ENCODE measurements at regions of chr19 and their contacts with region 1.

Region 1: GRCh38 chr19:506404-507285 is 652 bp upstream of the TPGS1 start:
- DNase-seq: peak; percentile 88 to 99 (median 98)
- ATAC-seq: peak; percentile 67
- H3K4me3 ChIP-seq: peak overlapping the region; percentile 100
- H3K4me3 Mint-ChIP-seq: peak overlapping the region; percentile 89 to 100 (median 97)
- H3K27ac ChIP-seq: peak overlapping the region; percentile 87
- H3K27ac Mint-ChIP-seq: peak overlapping the region; percentile 96 to 100 (median 99)
- H3K4me1 ChIP-seq: peaks cover 29 to 40% of the 10 kb centered on the region in 2 donors
- H3K4me1 Mint-ChIP-seq: peaks cover 21 to 49% (median 46%) of the 10 kb centered on the region in 7 donors
- H3K27me3 ChIP-seq: no peaks in the 10 kb centered on the region
- H3K27me3 Mint-ChIP-seq: no peaks in the 10 kb centered on the region

Region 2: GRCh38 chr19:294946-295686 is 211.5 kb before region 1 on chr19:
- CTCF ChIA-PET with region 1: no interaction called
- POLR2A ChIA-PET with region 1: no interaction called
- intact Hi-C with region 1: loop called in 1 of 2 experiments (anchors 2 kb)
- DNase-seq: peak in 6 of 9 donors; percentile 18 to 52 (median 30)
- ATAC-seq: peak; percentile 74
- H3K4me3 ChIP-seq: no peak overlapping the region
- H3K4me3 Mint-ChIP-seq: peak overlapping the region in 5 of 10 donors; percentile 25 to 59 (median 47)
- H3K27ac ChIP-seq: no peak overlapping the region
- H3K27ac Mint-ChIP-seq: no peak overlapping the region
- H3K4me1 ChIP-seq: peaks cover 0 to 5% of the 10 kb centered on the region in 2 donors
- H3K4me1 Mint-ChIP-seq: peaks cover 0 to 23% (median 14%) of the 10 kb centered on the region in 7 donors
- H3K27me3 ChIP-seq: peaks cover 0 to 7% of the 10 kb centered on the region in 2 donors
- H3K27me3 Mint-ChIP-seq: peaks cover 25 to 43% (median 29%) of the 10 kb centered on the region in 5 donors

Region 3: DNA sequence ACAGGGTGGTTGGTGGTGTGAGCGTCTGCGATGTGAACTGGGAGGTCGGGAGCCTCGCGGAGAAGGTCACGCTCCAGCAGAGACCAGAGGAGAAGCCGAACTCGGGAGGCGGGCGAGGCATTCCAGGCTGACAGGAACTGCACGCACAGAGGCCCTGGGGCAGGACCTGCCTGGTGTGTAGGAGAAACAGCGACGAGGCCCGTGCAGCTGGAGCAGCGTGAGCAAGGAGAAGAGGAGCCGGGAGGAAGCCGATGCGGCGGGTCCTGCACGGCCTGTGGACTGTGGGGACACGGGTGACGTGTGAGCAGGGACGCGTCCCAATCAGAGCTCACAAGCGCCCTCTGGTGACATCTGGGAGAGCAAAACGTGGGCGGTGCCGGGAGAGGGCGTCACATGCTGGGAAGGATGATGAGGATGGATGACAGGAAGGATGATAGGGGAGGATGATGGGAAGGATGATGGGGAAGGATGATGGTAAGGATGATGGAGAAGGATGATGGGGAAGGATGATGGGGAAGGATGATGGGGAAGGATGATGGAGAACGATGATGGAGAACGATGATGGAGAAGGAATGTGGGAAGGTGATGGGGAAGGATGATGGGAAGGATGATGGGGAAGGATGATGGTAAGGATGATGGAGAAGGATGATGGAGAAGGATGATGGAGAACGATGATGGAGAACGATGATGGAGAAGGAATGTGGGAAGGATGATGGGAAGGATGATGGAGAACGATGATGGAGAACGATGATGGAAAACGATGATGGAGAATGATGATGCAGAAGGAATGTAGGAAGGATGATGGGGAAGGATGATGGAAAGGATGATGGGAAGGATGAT is 26.4 kb before region 1 on chr19:
- CTCF ChIA-PET with region 1: no interaction called
- POLR2A ChIA-PET with region 1: interaction called, 3 read pairs
- intact Hi-C with region 1: loop called in 1 of 2 experiments (anchors 1 kb)
- DNase-seq: peak in 5 of 9 donors; percentile 35 to 47 (median 45)
- ATAC-seq: peak; percentile 56
- H3K4me3 ChIP-seq: no peak overlapping the region
- H3K4me3 Mint-ChIP-seq: peak overlapping the region in 9 of 10 donors; percentile 43 to 81 (median 77)
- H3K27ac ChIP-seq: no peak overlapping the region
- H3K27ac Mint-ChIP-seq: peak overlapping the region in 8 of 9 donors; percentile 83 to 93 (median 90)
- H3K4me1 ChIP-seq: no peaks in the 10 kb centered on the region
- H3K4me1 Mint-ChIP-seq: peaks cover 6 to 16% (median 10%) of the 10 kb centered on the region in 7 donors
- H3K27me3 ChIP-seq: peaks cover 0 to 4% of the 10 kb centered on the region in 2 donors
- H3K27me3 Mint-ChIP-seq: peaks cover 0 to 19% (median 7%) of the 10 kb centered on the region in 5 donors

Region 4: GRCh38 chr19:518603-519231 is 12.1 kb after region 1 on chr19:
- CTCF ChIA-PET with region 1: interaction called, 8 read pairs
- POLR2A ChIA-PET with region 1: interaction called, 17 read pairs
- intact Hi-C with region 1: loop called (anchors 1 kb)
- DNase-seq: peak in 8 of 9 donors; percentile 53 to 74 (median 66)
- ATAC-seq: peak; percentile 92
- H3K4me3 ChIP-seq: no peak overlapping the region
- H3K4me3 Mint-ChIP-seq: peak overlapping the region in 4 of 10 donors; percentile 35 to 63 (median 40)
- H3K27ac ChIP-seq: peak overlapping the region; percentile 45
- H3K27ac Mint-ChIP-seq: peak overlapping the region in 2 of 9 donors; percentile 32 to 67
- H3K4me1 ChIP-seq: no peaks in the 10 kb centered on the region
- H3K4me1 Mint-ChIP-seq: peaks cover 5 to 31% (median 19%) of the 10 kb centered on the region in 7 donors
- H3K27me3 ChIP-seq: no peaks in the 10 kb centered on the region
- H3K27me3 Mint-ChIP-seq: no peaks in the 10 kb centered on the region

Region 5: DNA sequence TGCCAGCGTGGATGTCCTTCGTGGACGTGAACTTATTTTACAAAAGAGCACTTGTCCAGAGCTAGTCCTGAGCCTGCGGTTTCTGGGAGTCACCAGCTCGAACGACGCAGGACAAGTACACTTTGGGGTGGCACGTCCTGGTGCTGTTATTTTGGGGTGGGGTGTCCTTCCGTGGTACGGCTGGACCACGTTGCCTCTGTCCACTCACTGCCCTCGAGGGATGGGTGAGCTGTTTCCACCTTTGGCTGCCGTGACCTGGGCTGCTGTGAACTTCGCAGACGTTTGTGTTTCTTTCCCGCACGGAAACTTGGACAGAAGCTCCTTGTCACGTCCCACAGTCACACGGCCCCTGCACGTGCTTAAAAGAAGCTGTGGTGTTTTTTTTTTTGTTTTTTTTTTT is 48.2 kb after region 1 on chr19:
- CTCF ChIA-PET with region 1: no interaction called
- POLR2A ChIA-PET with region 1: no interaction called
- intact Hi-C with region 1: no loop called
- DNase-seq: no peak
- ATAC-seq: no peak
- H3K4me3 ChIP-seq: no peak overlapping the region
- H3K4me3 Mint-ChIP-seq: no peak overlapping the region
- H3K27ac ChIP-seq: no peak overlapping the region
- H3K27ac Mint-ChIP-seq: no peak overlapping the region
- H3K4me1 ChIP-seq: no peaks in the 10 kb centered on the region
- H3K4me1 Mint-ChIP-seq: peaks cover 0 to 6% (median 4%) of the 10 kb centered on the region in 7 donors
- H3K27me3 ChIP-seq: no peaks in the 10 kb centered on the region
- H3K27me3 Mint-ChIP-seq: no peaks in the 10 kb centered on the region

Region 6: GRCh38 chr19:610801-611505 is 104.3 kb after region 1 on chr19:
- CTCF ChIA-PET with region 1: no interaction called
- POLR2A ChIA-PET with region 1: interaction called, 5 read pairs
- intact Hi-C with region 1: loop called in 1 of 2 experiments (anchors 1 kb)
- DNase-seq: peak in 8 of 9 donors; percentile 55 to 75 (median 62)
- ATAC-seq: peak; percentile 72
- H3K4me3 ChIP-seq: peak overlapping the region; percentile 49
- H3K4me3 Mint-ChIP-seq: peak overlapping the region; percentile 83 to 97 (median 94)
- H3K27ac ChIP-seq: peak overlapping the region; percentile 75
- H3K27ac Mint-ChIP-seq: peak overlapping the region; percentile 81 to 98 (median 90)
- H3K4me1 ChIP-seq: peaks cover 12% of the 10 kb centered on the region in 2 donors
- H3K4me1 Mint-ChIP-seq: peaks cover 0 to 23% (median 17%) of the 10 kb centered on the region in 7 donors
- H3K27me3 ChIP-seq: no peaks in the 10 kb centered on the region
- H3K27me3 Mint-ChIP-seq: no peaks in the 10 kb centered on the region

Region 7: GRCh38 chr19:796692-797527 is 290.3 kb after region 1 on chr19 and contains the start of gene PTBP1:
- CTCF ChIA-PET with region 1: no interaction called
- POLR2A ChIA-PET with region 1: no interaction called
- intact Hi-C with region 1: loop called in 1 of 2 experiments (anchors 1 kb)
- DNase-seq: peak; percentile 94 to 100 (median 100)
- ATAC-seq: peak; percentile 91
- H3K4me3 ChIP-seq: peak within 1 kb of the TSS; percentile 78
- H3K4me3 Mint-ChIP-seq: peak within 1 kb of the TSS; percentile 86 to 97 (median 94)
- H3K27ac ChIP-seq: peak within 1 kb of the TSS; percentile 78
- H3K27ac Mint-ChIP-seq: peak within 1 kb of the TSS; percentile 85 to 97 (median 92)
- H3K4me1 ChIP-seq: peaks cover 29 to 31% of the 10 kb centered on the region in 2 donors
- H3K4me1 Mint-ChIP-seq: peaks cover 26 to 36% (median 32%) of the 10 kb centered on the region in 7 donors
- H3K27me3 ChIP-seq: no peaks in the 10 kb centered on the region
- H3K27me3 Mint-ChIP-seq: peaks cover 0 to 2% (median 0%) of the 10 kb centered on the region in 5 donors
- total RNA-seq, gene PTBP1: 313 to 524 (median 326) TPM